A549 (cell line): ENCODE measurements at regions of chr17 and their contacts with region 1.

Region 1: GRCh38 chr17:17496189-17497064 is at the start of gene RASD1:
- DNase-seq: peak; percentile 85 to 88
- ATAC-seq: peak; percentile 83 to 90
- H3K4me3 ChIP-seq: peak within 1 kb of the TSS; percentile 63
- H3K27ac ChIP-seq: peak within 1 kb of the TSS; percentile 81 to 93
- H3K4me1 ChIP-seq: peaks cover 4% of the 10 kb centered on the region; the same call in 2 of the 3 replicates
- CTCF ChIP-seq: peak; percentile 98
- EP300 ChIP-seq: no peak
- POLR2A ChIP-seq: peak; percentile 76
- RAD21 ChIP-seq: peak; percentile 69 to 94
- polyA plus RNA-seq, gene RASD1: 0.99 and 1.4 TPM in 2 replicates

Region 2: GRCh38 chr17:17435323-17435722 is 61.1 kb before region 1 on chr17:
- CTCF ChIA-PET with region 1: interaction called, 22 read pairs
- POLR2A ChIA-PET with region 1: interaction called, 8 read pairs
- DNase-seq: peak; percentile 35 to 78
- ATAC-seq: peak; percentile 78 to 87
- H3K4me3 ChIP-seq: no peak overlapping the region
- H3K27ac ChIP-seq: peak overlapping the region; percentile 60 to 71
- H3K4me1 ChIP-seq: peaks cover 42% of the 10 kb centered on the region
- CTCF ChIP-seq: no peak
- EP300 ChIP-seq: peak; percentile 38 to 65; a peak in 1 of 5 replicates
- POLR2A ChIP-seq: no peak
- RAD21 ChIP-seq: peak in 1 of 2 experiments; percentile 28; a peak in 2 of 5 replicates

Region 3: DNA sequence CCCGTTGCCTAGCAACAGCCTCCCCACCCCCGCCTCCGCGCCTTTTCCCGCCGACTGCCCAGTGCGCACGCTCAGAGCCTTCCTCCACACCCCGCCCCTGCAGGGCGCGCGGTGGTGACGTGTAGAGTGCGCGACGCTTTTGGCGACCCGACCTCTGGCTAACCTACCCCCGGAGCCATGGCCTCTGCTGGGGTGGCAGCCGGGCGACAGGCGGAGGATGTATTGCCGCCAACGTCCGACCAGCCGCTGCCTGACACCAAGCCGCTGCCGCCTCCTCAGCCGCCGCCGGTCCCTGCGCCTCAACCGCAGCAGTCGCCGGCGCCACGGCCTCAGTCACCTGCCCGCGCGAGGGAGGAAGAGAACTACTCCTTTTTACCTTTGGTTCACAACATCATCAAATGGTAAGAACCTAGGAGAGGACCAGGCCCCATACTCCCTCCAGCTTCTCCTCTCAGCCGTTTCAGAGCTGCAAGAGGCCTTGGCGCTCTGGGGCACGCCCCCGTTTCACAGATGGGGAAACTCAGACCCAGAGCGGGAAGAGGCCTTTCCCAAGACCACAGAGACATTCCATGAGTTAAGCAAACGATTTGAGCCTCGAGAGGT is 19.5 kb before region 1 on chr17 and contains the start of gene MED9:
- CTCF ChIA-PET with region 1: interaction called, 23 read pairs
- POLR2A ChIA-PET with region 1: interaction called, 13 read pairs
- DNase-seq: peak; percentile 95 to 97
- ATAC-seq: peak; percentile 88 to 94
- H3K4me3 ChIP-seq: peak within 1 kb of the TSS; percentile 86
- H3K27ac ChIP-seq: peak within 1 kb of the TSS; percentile 91 to 93
- H3K4me1 ChIP-seq: peaks cover 22% of the 10 kb centered on the region
- CTCF ChIP-seq: no peak
- EP300 ChIP-seq: no peak
- POLR2A ChIP-seq: peak; percentile 69
- RAD21 ChIP-seq: no peak
- polyA plus RNA-seq, gene MED9: 13.0 and 15.2 TPM in 2 replicates

Region 4: DNA sequence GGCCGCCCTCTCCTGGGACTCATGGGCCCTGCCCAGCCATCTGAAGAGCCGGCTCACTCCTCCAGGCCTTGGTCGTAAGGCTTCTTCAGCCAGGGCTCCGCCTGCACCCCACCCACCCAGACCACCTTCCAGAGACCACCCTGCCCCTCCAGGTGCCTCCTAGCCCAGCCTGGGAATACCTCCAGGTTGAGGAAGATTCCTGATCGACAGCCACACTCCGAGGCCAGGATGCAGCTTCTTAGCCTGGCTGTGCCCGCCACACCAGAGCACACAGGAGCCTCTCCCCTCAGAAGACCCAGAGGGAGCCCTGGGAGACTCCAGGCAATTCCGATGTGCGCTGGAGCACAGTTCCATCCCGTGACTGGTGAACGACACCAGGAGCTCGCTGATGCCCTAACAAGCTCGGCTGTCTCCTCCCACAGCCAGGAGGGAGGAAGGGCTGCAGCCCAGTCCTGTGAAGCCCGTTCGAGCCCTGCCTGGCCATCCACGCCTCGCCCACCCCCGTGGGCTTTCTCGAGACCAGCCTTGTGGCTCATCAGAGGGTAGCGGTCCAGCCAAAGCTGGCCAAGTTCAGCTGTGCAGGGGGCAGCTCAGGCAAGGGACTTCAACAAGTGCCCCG is 21.5 kb after region 1 on chr17:
- CTCF ChIA-PET with region 1: interaction called, 102 read pairs
- POLR2A ChIA-PET with region 1: interaction called, 7 read pairs
- DNase-seq: no peak
- ATAC-seq: no peak
- H3K4me3 ChIP-seq: no peak overlapping the region
- H3K27ac ChIP-seq: no peak overlapping the region
- H3K4me1 ChIP-seq: no peaks in the 10 kb centered on the region
- CTCF ChIP-seq: no peak
- EP300 ChIP-seq: no peak
- POLR2A ChIP-seq: no peak
- RAD21 ChIP-seq: no peak

Region 5: DNA sequence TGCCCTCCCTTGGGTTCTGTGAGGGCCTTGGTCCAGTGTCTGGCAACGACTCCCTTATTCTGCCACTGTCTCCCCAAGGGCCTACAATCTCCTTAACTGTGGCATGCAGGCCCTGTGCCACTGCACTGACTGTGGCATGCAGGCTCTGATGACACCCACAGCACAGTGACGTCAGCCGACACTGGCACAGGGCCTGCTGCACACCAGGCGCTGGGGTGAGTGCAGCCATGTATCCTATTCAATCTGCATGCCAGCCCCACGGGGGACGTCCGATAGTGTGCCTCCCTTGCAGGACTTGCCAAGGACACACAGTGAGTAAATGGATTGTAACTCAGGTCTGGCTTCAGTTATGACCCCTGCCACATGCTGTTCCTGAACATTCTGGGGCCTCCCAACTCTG is 39.5 kb after region 1 on chr17:
- CTCF ChIA-PET with region 1: interaction called, 40 read pairs
- POLR2A ChIA-PET with region 1: interaction called, 12 read pairs
- DNase-seq: peak; percentile 80 to 81
- ATAC-seq: peak; percentile 69 to 75
- H3K4me3 ChIP-seq: no peak overlapping the region
- H3K27ac ChIP-seq: peak overlapping the region; percentile 76 to 87
- H3K4me1 ChIP-seq: peaks cover 56% of the 10 kb centered on the region
- CTCF ChIP-seq: no peak
- EP300 ChIP-seq: peak; percentile 34 to 67; a peak in 3 of 5 replicates
- POLR2A ChIP-seq: no peak
- RAD21 ChIP-seq: no peak

Region 6: DNA sequence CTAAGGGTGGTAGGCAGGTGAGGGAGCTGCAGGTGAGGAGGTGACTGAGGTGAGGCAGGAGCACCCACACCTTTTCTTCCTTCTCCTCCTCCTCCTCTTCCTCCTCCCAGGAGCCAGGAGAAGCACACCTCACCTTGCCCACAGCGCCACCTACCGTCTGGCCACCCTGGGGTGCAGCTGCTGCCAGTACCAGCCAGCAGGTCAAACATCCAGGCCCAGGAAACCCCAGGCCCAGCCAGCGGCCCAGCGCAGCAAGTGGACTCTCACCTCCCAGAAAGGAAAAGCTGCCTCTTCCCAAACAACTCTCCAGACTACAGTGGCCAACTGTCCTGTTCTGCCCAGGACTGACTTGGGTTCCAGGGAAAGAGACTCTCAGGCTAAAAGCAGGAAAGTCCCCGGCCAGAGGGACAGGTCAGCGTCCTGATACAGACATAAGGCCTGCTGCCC is 72.3 kb after region 1 on chr17:
- CTCF ChIA-PET with region 1: interaction called, 254 read pairs
- POLR2A ChIA-PET with region 1: interaction called, 8 read pairs
- DNase-seq: peak; percentile 64 to 95
- ATAC-seq: peak; percentile 58 to 86; a peak in 5 of 6 replicates
- H3K4me3 ChIP-seq: no peak overlapping the region
- H3K27ac ChIP-seq: no peak overlapping the region
- H3K4me1 ChIP-seq: no peaks in the 10 kb centered on the region
- CTCF ChIP-seq: peak; percentile 84
- EP300 ChIP-seq: no peak
- POLR2A ChIP-seq: no peak
- RAD21 ChIP-seq: peak; percentile 80 to 81

Region 7: GRCh38 chr17:17613708-17614114 is 117.3 kb after region 1 on chr17:
- CTCF ChIA-PET with region 1: interaction called, 26 read pairs
- POLR2A ChIA-PET with region 1: interaction called, 14 read pairs
- DNase-seq: peak; percentile 77 to 85
- ATAC-seq: peak; percentile 97 to 98
- H3K4me3 ChIP-seq: no peak overlapping the region
- H3K27ac ChIP-seq: no peak overlapping the region
- H3K4me1 ChIP-seq: no peaks in the 10 kb centered on the region
- CTCF ChIP-seq: peak; percentile 59
- EP300 ChIP-seq: no peak
- POLR2A ChIP-seq: no peak
- RAD21 ChIP-seq: peak; percentile 54 to 55; a peak in 3 of 5 replicates